ENCODE measurements at regions of chr20 and their contacts with region 1.

Region 1: DNA sequence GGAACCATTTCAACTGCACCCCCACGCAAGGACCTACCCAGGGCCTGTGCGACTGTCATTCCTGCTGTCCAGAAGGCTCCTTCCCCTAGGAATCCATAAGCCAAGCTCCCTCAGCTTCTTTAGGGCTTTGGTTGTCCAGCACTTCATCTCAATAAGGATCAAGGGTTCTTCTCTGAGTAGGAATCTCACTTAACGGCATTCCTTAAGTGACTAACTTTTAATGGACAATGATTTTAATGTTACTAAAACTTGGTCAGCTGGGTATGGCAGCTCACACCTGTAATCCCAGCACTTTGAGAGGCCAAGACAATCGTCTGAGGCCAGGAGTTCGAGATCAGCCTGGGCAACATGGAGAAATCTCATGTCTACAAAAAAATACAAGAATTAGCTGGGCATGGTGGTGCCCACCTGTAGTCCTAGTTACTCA is 13.4 kb downstream of the UBE2V1 start:
- DNase-seq: no peak
- H3K4me3 ChIP-seq: no peak overlapping the region
- H3K4me3 Mint-ChIP-seq: peak overlapping the region in 3 of 7 donors; percentile 28 to 49 (median 49)
- H3K27ac ChIP-seq: no peak overlapping the region
- H3K27ac Mint-ChIP-seq: peak overlapping the region in 6 of 8 donors; percentile 69 to 90 (median 82)
- H3K4me1 ChIP-seq: peaks cover 30% of the 10 kb centered on the region
- H3K4me1 Mint-ChIP-seq: peaks cover 56 to 77% (median 67%) of the 10 kb centered on the region in 3 donors
- H3K27me3 ChIP-seq: no peaks in the 10 kb centered on the region
- H3K27me3 Mint-ChIP-seq: no peaks in the 10 kb centered on the region

Region 2: GRCh38 chr20:49888345-49888966 is 211.1 kb before region 1 on chr20:
- CTCF ChIA-PET with region 1: no interaction called
- POLR2A ChIA-PET with region 1: no interaction called
- DNase-seq: peak; percentile 21 to 67 (median 36)
- H3K4me3 ChIP-seq: no peak overlapping the region
- H3K4me3 Mint-ChIP-seq: no peak overlapping the region
- H3K27ac ChIP-seq: no peak overlapping the region
- H3K27ac Mint-ChIP-seq: peak overlapping the region in 3 of 8 donors; percentile 52 to 67 (median 59)
- H3K4me1 ChIP-seq: no peaks in the 10 kb centered on the region
- H3K4me1 Mint-ChIP-seq: peaks cover 7 to 14% (median 10%) of the 10 kb centered on the region in 3 donors
- H3K27me3 ChIP-seq: no peaks in the 10 kb centered on the region
- H3K27me3 Mint-ChIP-seq: no peaks in the 10 kb centered on the region

Region 3: GRCh38 chr20:50048420-50049166 is 51.0 kb before region 1 on chr20:
- CTCF ChIA-PET with region 1: no interaction called
- POLR2A ChIA-PET with region 1: no interaction called
- DNase-seq: peak in 4 of 5 donors; percentile 13 to 62 (median 49)
- H3K4me3 ChIP-seq: no peak overlapping the region
- H3K4me3 Mint-ChIP-seq: peak overlapping the region in 3 of 7 donors; percentile 7 to 46 (median 9)
- H3K27ac ChIP-seq: no peak overlapping the region
- H3K27ac Mint-ChIP-seq: peak overlapping the region in 6 of 8 donors; percentile 23 to 85 (median 61)
- H3K4me1 ChIP-seq: no peaks in the 10 kb centered on the region
- H3K4me1 Mint-ChIP-seq: peaks cover 9 to 13% (median 13%) of the 10 kb centered on the region in 3 donors
- H3K27me3 ChIP-seq: no peaks in the 10 kb centered on the region
- H3K27me3 Mint-ChIP-seq: peaks cover 13 to 30% of the 10 kb centered on the region in 2 donors

Region 4: GRCh38 chr20:50065325-50065615 is 34.3 kb before region 1 on chr20:
- CTCF ChIA-PET with region 1: no interaction called
- POLR2A ChIA-PET with region 1: no interaction called
- DNase-seq: no peak
- H3K4me3 ChIP-seq: no peak overlapping the region
- H3K4me3 Mint-ChIP-seq: no peak overlapping the region
- H3K27ac ChIP-seq: no peak overlapping the region
- H3K27ac Mint-ChIP-seq: no peak overlapping the region
- H3K4me1 ChIP-seq: no peaks in the 10 kb centered on the region
- H3K4me1 Mint-ChIP-seq: no peaks in the 10 kb centered on the region
- H3K27me3 ChIP-seq: no peaks in the 10 kb centered on the region
- H3K27me3 Mint-ChIP-seq: peaks cover 5% of the 10 kb centered on the region in 2 donors

Region 5: DNA sequence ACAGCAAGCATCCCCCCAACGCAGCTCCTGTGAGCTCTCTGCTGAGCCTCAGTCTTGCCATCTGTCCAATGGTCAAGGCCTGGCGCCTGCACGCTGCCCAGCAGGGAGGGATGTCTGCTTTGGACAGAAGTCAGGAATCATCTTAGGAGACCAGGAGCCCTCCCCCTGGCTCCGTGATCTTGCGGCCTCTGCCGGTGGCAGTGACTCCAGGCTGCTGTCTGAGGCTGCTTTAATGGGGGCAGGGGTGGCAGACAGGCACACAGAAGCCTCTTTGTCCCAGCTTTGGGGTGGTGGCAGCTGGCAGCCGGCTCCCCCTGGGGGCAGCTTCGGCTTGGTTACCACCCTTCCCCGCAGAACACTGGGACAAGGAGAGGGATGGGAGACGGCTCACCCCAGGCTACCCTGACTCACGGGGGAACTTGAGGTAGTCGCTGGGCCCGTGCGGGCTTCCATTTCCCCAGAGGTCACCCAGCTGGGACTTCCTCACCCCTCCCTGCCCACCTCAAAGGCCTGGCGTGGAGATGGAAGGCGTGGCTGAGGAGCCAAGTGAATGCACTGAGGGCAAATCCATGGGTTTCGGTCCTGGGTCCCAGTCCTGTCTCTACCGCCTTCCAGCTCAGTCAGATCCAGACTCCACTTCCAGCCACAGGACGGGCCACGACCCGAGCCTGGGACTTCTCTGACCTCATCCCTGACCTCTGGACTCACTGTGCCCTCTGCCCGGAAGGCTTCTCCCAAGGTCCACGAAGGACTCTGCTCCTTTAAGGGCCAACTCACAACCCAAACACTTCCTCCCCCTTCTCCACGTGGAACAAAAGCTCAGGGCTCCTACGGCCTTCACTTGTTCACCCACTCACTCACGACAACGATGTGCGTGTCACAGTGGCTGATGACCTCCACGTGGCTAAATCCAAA is 39.2 kb after region 1 on chr20:
- CTCF ChIA-PET with region 1: no interaction called
- POLR2A ChIA-PET with region 1: interaction called, 11 read pairs
- DNase-seq: no peak
- H3K4me3 ChIP-seq: no peak overlapping the region
- H3K4me3 Mint-ChIP-seq: no peak overlapping the region
- H3K27ac ChIP-seq: no peak overlapping the region
- H3K27ac Mint-ChIP-seq: peak overlapping the region in 2 of 8 donors; percentile 23 to 56
- H3K4me1 ChIP-seq: no peaks in the 10 kb centered on the region
- H3K4me1 Mint-ChIP-seq: peaks cover 25 to 48% (median 30%) of the 10 kb centered on the region in 3 donors
- H3K27me3 ChIP-seq: no peaks in the 10 kb centered on the region
- H3K27me3 Mint-ChIP-seq: peaks cover 0 to 1% of the 10 kb centered on the region in 2 donors

Region 6: DNA sequence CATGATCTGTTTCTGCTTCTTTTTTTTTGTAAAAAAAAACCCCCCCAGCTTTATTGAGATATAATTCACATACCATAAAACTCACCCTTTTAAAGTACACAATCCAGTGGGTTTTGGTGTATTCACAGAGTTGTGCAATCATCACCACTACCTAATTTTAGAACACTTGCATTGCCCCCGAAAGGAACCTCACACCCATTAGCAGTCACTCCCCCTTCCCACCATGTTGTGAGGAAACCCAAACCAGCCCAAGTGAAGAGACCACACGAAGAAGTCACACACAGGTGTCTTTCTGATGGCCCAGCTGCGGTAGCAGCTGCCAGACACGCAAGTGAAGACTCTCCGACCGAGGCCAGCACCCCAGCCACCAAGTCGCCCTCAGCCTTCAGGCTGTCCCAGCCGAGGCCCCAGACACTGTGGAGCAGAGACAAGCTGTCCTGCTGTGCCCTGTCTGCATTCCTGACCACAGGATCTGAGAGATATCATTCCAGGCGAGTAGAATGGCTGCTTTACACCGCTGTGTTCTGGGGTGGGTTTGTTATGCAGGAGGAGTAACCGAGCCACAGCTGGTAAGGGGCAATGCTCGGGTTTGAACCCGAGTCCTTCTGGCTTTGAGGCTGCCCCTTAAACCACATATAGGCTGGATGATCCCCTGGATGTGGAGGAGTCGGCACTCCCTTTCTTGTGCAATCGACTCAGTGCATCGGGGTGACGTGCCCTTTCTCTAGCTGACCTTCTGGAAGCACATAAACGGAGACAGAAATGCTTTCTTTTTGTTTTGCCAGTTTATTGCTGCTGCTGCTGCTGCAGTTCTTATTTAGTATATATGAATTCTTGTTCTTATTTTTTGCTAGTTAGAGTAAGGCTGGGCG is 351.5 kb after region 1 on chr20:
- CTCF ChIA-PET with region 1: no interaction called
- POLR2A ChIA-PET with region 1: no interaction called
- DNase-seq: peak in 2 of 5 donors; percentile 39 to 51
- H3K4me3 ChIP-seq: no peak overlapping the region
- H3K4me3 Mint-ChIP-seq: peak overlapping the region; percentile 0 to 89 (median 48)
- H3K27ac ChIP-seq: no peak overlapping the region
- H3K27ac Mint-ChIP-seq: peak overlapping the region in 4 of 8 donors; percentile 6 to 86 (median 53)
- H3K4me1 ChIP-seq: peaks cover 10% of the 10 kb centered on the region
- H3K4me1 Mint-ChIP-seq: peaks cover 15 to 16% (median 15%) of the 10 kb centered on the region in 3 donors
- H3K27me3 ChIP-seq: peaks cover 7% of the 10 kb centered on the region
- H3K27me3 Mint-ChIP-seq: peaks cover 16 to 44% of the 10 kb centered on the region in 2 donors

Measured in CD8-positive, alpha-beta memory T cell (primary cell).